Aorta (tissue), 5 donors: ENCODE measurements at regions of chr3 and their contacts with region 1.

Region 1: DNA sequence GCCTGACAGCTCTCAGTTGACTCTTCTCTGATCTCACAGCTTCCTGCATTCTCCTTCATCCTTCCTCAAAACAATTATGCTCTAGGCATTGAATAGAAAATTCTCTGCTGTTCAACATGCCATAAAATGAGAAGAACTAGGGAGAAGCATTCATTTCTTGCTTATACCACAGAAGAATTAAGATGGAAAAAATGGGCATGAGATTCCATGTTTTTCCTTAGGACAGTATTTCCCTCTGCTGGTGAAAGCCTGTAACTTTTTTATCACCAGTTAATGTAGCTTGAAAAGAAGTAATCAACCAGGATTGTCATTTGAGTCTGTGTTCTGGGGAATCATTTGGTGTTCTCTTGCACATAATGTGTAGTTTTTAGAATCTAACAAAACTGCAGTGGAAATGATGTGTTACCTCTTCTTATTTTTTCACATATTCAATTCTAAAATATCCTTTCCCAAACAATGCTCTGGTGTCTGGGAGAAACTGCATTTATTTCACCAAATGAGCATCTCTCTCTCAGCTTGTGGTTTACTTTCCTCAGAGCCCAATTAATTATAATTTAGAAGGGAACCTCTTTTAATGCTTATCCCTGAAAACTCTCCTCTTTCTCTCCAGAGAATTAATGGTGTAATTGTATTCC is 92.8 kb upstream of the DCBLD2 start:
- DNase-seq: no peak
- ATAC-seq: no peak
- H3K4me3 ChIP-seq: no peak overlapping the region
- H3K27ac ChIP-seq: no peak overlapping the region
- H3K4me1 ChIP-seq: no peaks in the 10 kb centered on the region
- H3K27me3 ChIP-seq: no peaks in the 10 kb centered on the region

Region 2: DNA sequence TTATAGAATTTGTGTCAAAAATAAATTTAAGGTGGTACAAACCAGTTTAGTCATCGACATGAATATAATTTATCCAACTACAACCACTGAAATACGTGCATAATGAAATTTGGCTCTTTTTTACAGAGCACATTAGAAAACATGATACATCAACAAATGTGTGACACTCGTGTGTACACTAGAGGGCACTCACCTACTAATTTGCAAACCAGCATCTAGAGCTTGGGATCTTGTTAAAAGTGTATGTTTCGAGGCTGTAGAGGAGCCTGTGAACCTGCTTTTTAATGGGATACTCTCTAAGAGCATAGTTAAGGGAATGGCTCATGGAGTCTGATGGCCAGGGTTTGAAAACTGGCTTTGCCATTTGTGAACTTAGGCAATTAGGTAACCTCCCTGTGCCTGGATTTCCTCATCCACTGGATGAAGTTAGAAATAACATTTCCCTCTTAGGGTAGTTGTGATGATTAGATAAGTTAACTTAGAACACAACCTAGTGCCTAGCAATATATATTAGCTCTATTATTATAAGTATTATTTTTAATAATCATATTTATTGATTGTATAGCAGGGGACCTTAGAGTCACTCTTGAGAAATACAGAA is 392.1 kb before region 1 on chr3:
- intact Hi-C with region 1: loop called (anchors 2 to 5 kb)
- DNase-seq: no peak
- ATAC-seq: peak; percentile 74
- H3K4me3 ChIP-seq: no peak overlapping the region
- H3K27ac ChIP-seq: no peak overlapping the region
- H3K4me1 ChIP-seq: no peaks in the 10 kb centered on the region
- H3K27me3 ChIP-seq: no peaks in the 10 kb centered on the region

Region 3: DNA sequence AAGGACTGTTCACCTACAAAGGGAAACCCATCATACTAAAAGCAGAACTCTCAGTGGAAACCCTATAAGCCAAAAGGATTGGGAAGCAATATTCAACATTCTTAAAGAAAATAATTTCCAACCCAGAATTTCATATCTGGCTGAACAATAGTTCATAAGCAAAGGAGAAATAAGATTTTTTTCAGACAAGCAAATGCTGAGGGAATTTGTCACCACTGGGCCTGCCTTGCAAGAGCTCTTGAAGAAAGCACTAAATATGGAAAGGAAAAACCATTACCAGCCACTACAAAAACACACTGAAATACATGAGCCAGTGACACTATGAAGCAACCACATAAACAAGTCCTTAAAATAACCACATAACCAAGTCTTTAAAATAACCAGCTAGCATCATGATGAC is 63.8 kb before region 1 on chr3:
- intact Hi-C with region 1: no loop called
- DNase-seq: no peak
- ATAC-seq: no peak
- H3K4me3 ChIP-seq: no peak overlapping the region
- H3K27ac ChIP-seq: no peak overlapping the region
- H3K4me1 ChIP-seq: no peaks in the 10 kb centered on the region
- H3K27me3 ChIP-seq: peaks cover 0 to 1% of the 10 kb centered on the region in 2 donors